ENCODE measurements at regions of chr10 and their contacts with region 1.

Region 1: GRCh38 chr10:68901104-68901927 is at the start of gene DDX50:
- H3K4me3 Mint-ChIP-seq: peak within 1 kb of the TSS; percentile 97
- H3K27ac Mint-ChIP-seq: peak within 1 kb of the TSS; percentile 99
- H3K4me1 Mint-ChIP-seq: peaks cover 34% of the 10 kb centered on the region
- H3K27me3 Mint-ChIP-seq: peaks cover 8% of the 10 kb centered on the region

Region 2: GRCh38 chr10:67779465-67780203 is 1121.7 kb before region 1 on chr10:
- intact Hi-C with region 1: loop called (anchors 10 kb)
- H3K4me3 Mint-ChIP-seq: no peak overlapping the region
- H3K27ac Mint-ChIP-seq: no peak overlapping the region
- H3K4me1 Mint-ChIP-seq: peaks cover 25% of the 10 kb centered on the region
- H3K27me3 Mint-ChIP-seq: no peaks in the 10 kb centered on the region

Region 3: GRCh38 chr10:68406815-68407548 is 494.3 kb before region 1 on chr10 and contains the start of gene RUFY2:
- intact Hi-C with region 1: loop called (anchors 5 kb)
- H3K4me3 Mint-ChIP-seq: peak within 1 kb of the TSS; percentile 96
- H3K27ac Mint-ChIP-seq: peak within 1 kb of the TSS; percentile 95
- H3K4me1 Mint-ChIP-seq: peaks cover 20% of the 10 kb centered on the region
- H3K27me3 Mint-ChIP-seq: peaks cover 1% of the 10 kb centered on the region

Region 4: DNA sequence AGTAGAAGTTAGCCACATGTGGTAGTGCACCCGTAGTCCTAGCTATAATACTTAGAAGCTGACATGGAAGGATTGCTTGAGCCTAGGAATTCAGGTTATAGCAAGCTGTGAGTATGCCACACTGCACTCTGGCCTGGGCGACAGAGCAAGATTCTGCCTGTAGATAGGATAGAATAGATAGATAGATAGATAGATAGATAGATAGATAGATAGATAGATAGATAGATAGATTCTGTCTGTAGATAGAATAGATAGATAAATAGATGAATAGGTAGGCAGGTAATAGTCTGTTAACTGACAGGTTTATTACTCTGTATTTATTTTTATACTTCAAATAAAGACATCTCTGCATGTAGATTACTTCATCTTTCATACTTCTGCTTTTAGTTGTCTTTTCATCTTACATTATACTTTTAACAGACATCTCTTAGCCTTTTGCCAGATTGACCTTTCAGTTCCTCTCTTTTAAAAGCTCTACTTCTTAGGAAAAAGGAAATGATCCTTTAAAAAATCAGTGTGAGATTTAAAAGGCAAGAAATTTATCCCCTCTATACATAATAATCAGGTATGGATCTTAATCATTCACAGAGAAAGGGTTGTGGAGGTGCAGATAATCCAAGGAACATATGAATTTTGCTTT is 148.5 kb before region 1 on chr10:
- intact Hi-C with region 1: loop called (anchors 10 kb)
- H3K4me3 Mint-ChIP-seq: peak overlapping the region; percentile 23
- H3K27ac Mint-ChIP-seq: peak overlapping the region; percentile 83
- H3K4me1 Mint-ChIP-seq: peaks cover 14% of the 10 kb centered on the region
- H3K27me3 Mint-ChIP-seq: no peaks in the 10 kb centered on the region

Region 5: DNA sequence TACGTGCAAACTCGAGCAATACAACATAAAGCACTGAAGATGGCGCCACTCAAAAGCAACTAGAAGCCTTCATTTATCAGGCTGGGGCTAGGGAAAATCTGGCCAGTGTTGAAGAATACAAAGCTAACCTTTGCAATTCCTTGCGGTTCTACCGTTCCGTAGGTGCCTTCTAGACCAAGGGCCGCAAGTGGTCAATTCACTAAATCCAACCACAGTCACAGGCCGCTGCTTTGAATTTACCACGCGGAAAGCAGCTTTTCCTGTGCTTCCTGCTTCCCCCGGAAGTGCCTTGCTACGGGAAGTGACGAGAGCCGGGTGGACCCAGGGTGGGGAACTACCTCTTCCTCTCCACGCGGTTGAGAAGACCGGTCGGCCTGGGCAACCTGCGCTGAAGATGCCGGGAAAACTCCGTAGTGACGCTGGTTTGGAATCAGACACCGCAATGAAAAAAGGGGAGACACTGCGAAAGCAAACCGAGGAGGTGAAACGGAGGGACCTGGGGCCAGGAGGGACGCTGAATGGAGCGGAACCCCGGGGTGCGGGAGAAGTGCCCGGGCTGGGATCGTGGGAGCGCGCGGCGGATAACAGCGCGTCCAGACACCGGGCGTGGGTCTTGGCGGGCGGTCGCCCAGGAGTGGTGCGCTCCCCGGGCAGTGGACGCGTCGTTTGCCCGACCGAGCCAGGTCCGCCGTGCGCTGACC is 54.7 kb after region 1 on chr10 and contains the start of gene DDX21:
- intact Hi-C with region 1: loop called (anchors 5 kb)
- H3K4me3 Mint-ChIP-seq: peak within 1 kb of the TSS; percentile 90
- H3K27ac Mint-ChIP-seq: peak within 1 kb of the TSS; percentile 93
- H3K4me1 Mint-ChIP-seq: peaks cover 23% of the 10 kb centered on the region
- H3K27me3 Mint-ChIP-seq: no peaks in the 10 kb centered on the region